Activated CD4-positive, alpha-beta T cell treated with anti-CD3 and anti-CD28 coated beads for 36 hours (primary cell): ENCODE measurements at regions of chr11 and their contacts with region 1.

Region 1: GRCh38 chr11:119205574-119206510 is at the start of gene CBL:
- DNase-seq: peak; percentile 99
- ATAC-seq: peak; percentile 85
- H3K4me3 Mint-ChIP-seq: peak within 1 kb of the TSS; percentile 98
- H3K27ac Mint-ChIP-seq: peak within 1 kb of the TSS; percentile 94
- H3K4me1 Mint-ChIP-seq: peaks cover 27% of the 10 kb centered on the region
- H3K27me3 Mint-ChIP-seq: no peaks in the 10 kb centered on the region
- total RNA-seq, gene CBL: 29.3 to 33.2 TPM

Region 2: GRCh38 chr11:119018074-119018938 is 187.5 kb before region 1 on chr11 and contains the starts of genes RPS25 and TRAPPC4:
- CTCF ChIA-PET with region 1: no interaction called
- POLR2A ChIA-PET with region 1: no interaction called
- intact Hi-C with region 1: loop called in 1 of 2 experiments (anchors 2 kb)
- DNase-seq: peak; percentile 98
- ATAC-seq: peak; percentile 92
- H3K4me3 Mint-ChIP-seq: peak within 1 kb of the TSS; percentile 99
- H3K27ac Mint-ChIP-seq: peak within 1 kb of the TSS; percentile 99
- H3K4me1 Mint-ChIP-seq: peaks cover 53% of the 10 kb centered on the region
- H3K27me3 Mint-ChIP-seq: no peaks in the 10 kb centered on the region
- total RNA-seq, gene RPS25: 1,590 to 1,820 TPM
- total RNA-seq, gene TRAPPC4: 62.2 to 81.9 TPM

Region 3: DNA sequence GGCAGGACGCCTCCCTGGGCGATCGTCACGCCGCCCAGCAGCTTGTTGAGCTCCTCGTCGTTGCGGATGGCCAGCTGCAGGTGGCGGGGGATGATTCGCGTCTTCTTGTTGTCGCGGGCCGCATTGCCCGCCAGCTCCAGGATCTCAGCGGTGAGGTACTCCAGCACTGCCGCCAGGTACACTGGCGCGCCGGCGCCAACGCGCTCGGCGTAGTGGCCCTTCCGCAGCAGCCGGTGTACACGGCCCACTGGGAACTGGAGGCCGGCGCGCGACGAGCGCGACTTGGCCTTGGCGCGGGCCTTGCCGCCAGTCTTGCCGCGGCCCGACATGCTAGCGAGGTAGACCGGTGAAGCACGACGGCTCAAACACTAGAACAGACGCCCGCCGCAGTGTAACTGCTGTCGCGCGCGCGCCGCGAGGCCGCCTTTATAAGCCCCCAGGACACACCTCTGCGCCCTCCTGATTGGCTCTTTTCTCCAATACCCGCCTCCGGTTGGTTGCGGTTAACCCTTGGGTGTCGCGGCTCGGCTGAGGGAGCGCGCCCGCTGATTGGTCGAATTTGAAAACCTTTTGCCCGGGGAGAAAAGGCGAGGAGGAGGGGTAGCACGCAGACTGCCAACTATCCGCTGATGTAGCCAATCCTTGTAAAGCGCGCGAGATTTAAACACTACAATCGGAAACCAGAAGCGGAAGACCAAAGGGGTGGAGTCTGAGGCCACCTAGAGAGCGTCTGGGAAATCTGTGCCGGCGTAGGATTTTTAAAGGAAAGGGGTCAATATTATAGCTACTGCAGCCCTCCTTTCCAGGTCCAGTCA is 110.6 kb before region 1 on chr11:
- CTCF ChIA-PET with region 1: interaction called, 3 read pairs
- POLR2A ChIA-PET with region 1: no interaction called
- intact Hi-C with region 1: loop called in 1 of 2 experiments (anchors 1 kb)
- DNase-seq: peak; percentile 100
- ATAC-seq: peak; percentile 90
- H3K4me3 Mint-ChIP-seq: peak overlapping the region; percentile 93
- H3K27ac Mint-ChIP-seq: peak overlapping the region; percentile 94
- H3K4me1 Mint-ChIP-seq: peaks cover 50% of the 10 kb centered on the region
- H3K27me3 Mint-ChIP-seq: no peaks in the 10 kb centered on the region

Region 4: GRCh38 chr11:119121008-119121810 is 84.6 kb before region 1 on chr11 and contains the start of gene HINFP:
- CTCF ChIA-PET with region 1: interaction called, 3 read pairs
- POLR2A ChIA-PET with region 1: no interaction called
- intact Hi-C with region 1: loop called (anchors 1 to 5 kb)
- DNase-seq: peak; percentile 100
- ATAC-seq: peak; percentile 98
- H3K4me3 Mint-ChIP-seq: peak within 1 kb of the TSS; percentile 94
- H3K27ac Mint-ChIP-seq: peak within 1 kb of the TSS; percentile 91
- H3K4me1 Mint-ChIP-seq: peaks cover 25% of the 10 kb centered on the region
- H3K27me3 Mint-ChIP-seq: no peaks in the 10 kb centered on the region
- total RNA-seq, gene HINFP: 24.0 to 27.2 TPM

Region 5: DNA sequence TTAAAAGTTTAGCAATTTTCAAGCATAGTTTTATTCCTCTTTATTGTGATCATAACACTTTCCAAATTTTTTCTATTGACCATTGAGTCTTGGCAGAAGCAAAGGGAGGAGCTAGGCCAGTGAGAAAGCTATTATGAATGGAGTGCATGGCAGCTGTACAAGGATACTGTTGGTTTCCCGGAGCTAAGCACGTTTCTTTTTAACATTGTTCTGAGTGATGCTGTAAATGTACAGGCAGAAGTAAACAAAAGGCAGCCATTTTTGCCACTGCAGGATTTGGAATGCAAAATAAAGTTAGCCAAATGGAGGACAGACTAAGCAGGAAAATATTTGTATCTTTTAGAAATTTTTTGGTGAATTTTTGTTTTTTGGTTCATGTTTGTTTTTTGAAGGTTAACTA is 16.5 kb after region 1 on chr11:
- CTCF ChIA-PET with region 1: interaction called, 11 read pairs
- POLR2A ChIA-PET with region 1: interaction called, 5 read pairs
- intact Hi-C with region 1: loop called (anchors 1 kb)
- DNase-seq: no peak
- ATAC-seq: no peak
- H3K4me3 Mint-ChIP-seq: no peak overlapping the region
- H3K27ac Mint-ChIP-seq: peak overlapping the region; percentile 28
- H3K4me1 Mint-ChIP-seq: peaks cover 65% of the 10 kb centered on the region
- H3K27me3 Mint-ChIP-seq: no peaks in the 10 kb centered on the region

Region 6: DNA sequence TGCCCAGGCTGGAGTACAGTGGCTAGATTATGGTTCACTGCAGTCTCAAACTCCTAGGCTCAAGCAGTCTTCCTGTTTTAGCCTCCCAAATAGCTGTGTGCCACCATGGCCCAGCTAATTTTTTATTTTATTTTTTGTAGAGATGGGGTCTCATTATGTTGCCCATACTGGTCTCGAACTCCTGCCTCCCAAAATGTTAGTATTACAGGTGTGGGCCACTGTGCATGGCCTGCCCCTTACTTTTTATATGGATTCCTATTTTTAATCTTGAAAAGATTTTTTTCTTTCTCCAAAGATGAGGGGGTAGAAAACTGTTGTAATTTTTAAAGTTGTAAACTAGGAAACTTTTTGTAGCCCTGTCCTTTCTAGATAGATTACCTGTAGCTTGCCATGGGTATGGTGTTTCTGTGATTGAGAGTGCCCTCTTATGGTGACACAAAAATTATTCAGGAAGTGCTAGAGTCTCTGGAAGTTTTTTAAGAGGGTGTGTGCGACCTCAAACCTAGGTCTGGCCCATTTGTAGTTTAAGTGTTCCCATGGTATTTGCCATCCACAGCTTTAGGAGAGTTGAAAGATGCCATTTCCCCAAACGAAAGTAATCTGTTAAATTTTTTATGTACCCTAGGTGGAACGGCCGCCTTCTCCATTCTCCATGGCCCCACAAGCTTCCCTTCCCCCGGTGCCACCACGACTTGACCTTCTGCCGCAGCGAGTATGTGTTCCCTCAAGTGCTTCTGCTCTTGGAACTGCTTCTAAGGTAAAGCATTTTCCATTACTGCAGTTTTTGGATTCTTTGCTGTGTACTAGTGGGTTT is 78.7 kb after region 1 on chr11:
- CTCF ChIA-PET with region 1: interaction called, 30 read pairs
- POLR2A ChIA-PET with region 1: no interaction called
- intact Hi-C with region 1: loop called (anchors 1 kb)
- DNase-seq: no peak
- ATAC-seq: peak; percentile 94
- H3K4me3 Mint-ChIP-seq: no peak overlapping the region
- H3K27ac Mint-ChIP-seq: peak overlapping the region; percentile 47
- H3K4me1 Mint-ChIP-seq: peaks cover 19% of the 10 kb centered on the region
- H3K27me3 Mint-ChIP-seq: no peaks in the 10 kb centered on the region

Region 7: DNA sequence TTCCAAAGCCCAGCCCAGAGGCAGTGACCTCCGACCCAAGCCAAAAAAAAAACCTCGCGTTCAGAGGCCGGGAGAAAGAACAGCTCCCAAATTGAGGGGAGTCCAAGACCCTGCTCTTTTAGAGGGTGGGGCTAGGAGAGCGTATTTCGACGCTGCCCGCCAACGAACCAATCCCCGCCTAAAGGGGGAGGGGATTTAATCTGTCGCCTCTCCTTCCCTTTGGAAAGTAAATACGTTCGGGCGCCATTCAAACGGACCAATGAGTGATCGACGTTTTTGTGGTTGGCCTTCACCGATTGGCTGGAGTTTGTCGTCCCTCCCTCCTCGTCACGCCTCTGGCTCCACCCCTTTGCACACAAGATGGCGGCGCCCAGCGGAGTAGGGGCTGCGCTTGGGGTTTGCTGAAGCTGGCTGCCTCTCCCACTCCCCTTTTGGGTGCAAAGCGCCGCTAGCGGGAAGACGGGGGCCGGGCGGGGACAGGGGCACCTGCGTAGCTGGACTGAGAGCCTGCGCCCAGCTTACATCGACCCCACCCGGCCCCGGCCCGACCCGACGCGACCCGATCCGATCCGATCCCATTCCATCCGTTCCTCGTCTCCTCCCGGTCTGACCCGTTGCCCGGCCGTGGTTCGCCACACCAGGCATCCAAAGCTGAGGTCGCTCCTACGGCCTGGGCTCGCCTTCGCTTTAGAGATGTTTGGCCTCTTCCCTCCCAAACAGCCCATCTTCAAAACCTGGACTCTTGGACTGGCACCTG is 128.5 kb after region 1 on chr11 and contains the start of gene RNF26:
- CTCF ChIA-PET with region 1: interaction called, 8 read pairs
- POLR2A ChIA-PET with region 1: no interaction called
- intact Hi-C with region 1: loop called in 1 of 2 experiments (anchors 1 kb)
- DNase-seq: peak; percentile 96
- ATAC-seq: peak; percentile 96
- H3K4me3 Mint-ChIP-seq: peak within 1 kb of the TSS; percentile 99
- H3K27ac Mint-ChIP-seq: peak within 1 kb of the TSS; percentile 99
- H3K4me1 Mint-ChIP-seq: peaks cover 29% of the 10 kb centered on the region
- H3K27me3 Mint-ChIP-seq: peaks cover 7% of the 10 kb centered on the region
- total RNA-seq, gene RNF26: 29.9 TPM